Heart right ventricle (tissue), 16 donors: ENCODE measurements at regions of chr16 and their contacts with region 1.

Region 1: DNA sequence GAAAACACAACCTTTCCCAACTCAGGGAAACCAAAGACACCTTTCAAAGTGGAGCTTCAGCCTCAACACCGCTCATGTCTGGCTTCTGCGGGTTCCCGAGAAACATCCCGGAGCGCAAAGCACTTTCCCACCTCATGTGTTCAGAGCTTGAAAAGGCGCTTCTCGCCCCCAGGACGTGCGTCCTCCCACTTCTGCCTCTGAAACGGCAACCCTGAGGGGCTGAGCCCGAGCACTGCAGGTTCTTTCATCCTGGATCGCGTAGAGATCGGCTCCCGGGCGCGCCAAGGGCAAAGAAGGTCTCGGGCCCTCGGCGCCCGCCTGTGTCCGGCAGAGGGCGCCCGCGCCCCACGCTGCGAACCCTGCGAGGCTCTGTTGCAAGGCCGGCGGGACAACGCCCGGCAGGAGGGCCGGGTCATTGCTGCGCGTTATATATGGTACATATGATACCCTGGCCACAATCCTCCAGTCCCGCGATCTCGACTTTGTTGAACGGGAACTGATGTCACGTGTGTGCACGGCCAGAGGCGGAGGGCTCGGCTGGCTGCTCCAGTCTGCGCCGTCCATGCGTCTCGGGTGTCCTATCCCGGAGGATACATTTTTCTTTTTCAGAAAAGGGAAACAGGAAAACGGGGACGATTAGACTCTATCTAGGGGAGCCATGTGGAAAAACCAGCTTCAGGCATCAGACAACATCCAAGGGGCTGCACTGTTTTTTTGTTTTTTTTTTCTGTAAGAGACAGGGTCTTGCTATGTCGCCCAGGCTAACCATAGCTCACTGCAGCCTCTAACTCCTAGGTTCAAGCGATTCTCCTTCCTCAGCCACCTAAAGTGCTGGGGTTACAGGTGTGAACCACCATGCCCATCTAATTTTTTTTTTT is 19.1 kb downstream of the COQ7 start:
- DNase-seq: peak; percentile 79 to 88
- ATAC-seq: peak; percentile 93 to 98 (median 97)
- H3K4me3 ChIP-seq: peak overlapping the region in 9 of 10 donors; percentile 29 to 62 (median 54)
- H3K27ac ChIP-seq: peak overlapping the region in 5 of 10 donors; percentile 12 to 76 (median 28)
- H3K4me1 ChIP-seq: peaks cover 0 to 33% (median 11%) of the 10 kb centered on the region in 9 donors
- H3K27me3 ChIP-seq: peaks cover 0 to 13% (median 0%) of the 10 kb centered on the region in 7 donors
- CTCF ChIP-seq: peak; percentile 99 to 100 (median 100)

Region 2: DNA sequence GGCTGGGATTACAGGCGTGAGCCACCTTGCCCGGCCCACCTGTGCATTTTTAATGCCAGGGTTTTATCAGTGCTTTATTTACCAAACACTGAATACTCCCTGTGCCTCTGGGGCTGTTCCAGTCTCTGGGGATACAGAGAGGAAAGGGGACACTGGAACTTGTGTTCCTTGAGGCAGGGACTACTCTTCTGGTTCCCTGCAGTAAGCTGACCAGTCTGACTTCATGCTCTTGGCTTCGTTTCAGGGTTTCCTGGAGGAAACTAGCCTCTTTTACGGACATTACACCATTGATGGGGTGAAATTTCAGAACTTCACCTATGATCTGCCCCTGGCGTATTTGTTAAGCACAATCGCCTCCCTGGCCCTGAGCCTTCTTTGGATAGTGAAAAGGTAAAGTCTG is 56.6 kb before region 1 on chr16:
- intact Hi-C with region 1: no loop called
- DNase-seq: peak in 1 of 2 donors; percentile 33
- ATAC-seq: peak; percentile 50 to 86 (median 80)
- H3K4me3 ChIP-seq: no peak overlapping the region
- H3K27ac ChIP-seq: peak overlapping the region in 6 of 10 donors; percentile 14 to 64 (median 28)
- H3K4me1 ChIP-seq: peaks cover 0 to 18% (median 0%) of the 10 kb centered on the region in 9 donors
- H3K27me3 ChIP-seq: no peaks in the 10 kb centered on the region
- CTCF ChIP-seq: no peak

Region 3: GRCh38 chr16:19167710-19168370 is 81.3 kb after region 1 on chr16 and contains the start of gene SYT17:
- intact Hi-C with region 1: loop called in 3 of 10 experiments (anchors 2 to 10 kb)
- DNase-seq: peak; percentile 50 to 77
- ATAC-seq: peak; percentile 88 to 93 (median 91)
- H3K4me3 ChIP-seq: peak within 1 kb of the TSS; percentile 45 to 64 (median 58)
- H3K27ac ChIP-seq: peak within 1 kb of the TSS in 5 of 10 donors; percentile 54 to 71 (median 66)
- H3K4me1 ChIP-seq: peaks cover 0 to 24% (median 15%) of the 10 kb centered on the region in 9 donors
- H3K27me3 ChIP-seq: peaks cover 0 to 61% (median 27%) of the 10 kb centered on the region in 7 donors
- CTCF ChIP-seq: peak; percentile 48 to 84 (median 68)
- total RNA-seq, gene SYT17: 0.20 to 1.3 (median 0.69) TPM

Region 4: DNA sequence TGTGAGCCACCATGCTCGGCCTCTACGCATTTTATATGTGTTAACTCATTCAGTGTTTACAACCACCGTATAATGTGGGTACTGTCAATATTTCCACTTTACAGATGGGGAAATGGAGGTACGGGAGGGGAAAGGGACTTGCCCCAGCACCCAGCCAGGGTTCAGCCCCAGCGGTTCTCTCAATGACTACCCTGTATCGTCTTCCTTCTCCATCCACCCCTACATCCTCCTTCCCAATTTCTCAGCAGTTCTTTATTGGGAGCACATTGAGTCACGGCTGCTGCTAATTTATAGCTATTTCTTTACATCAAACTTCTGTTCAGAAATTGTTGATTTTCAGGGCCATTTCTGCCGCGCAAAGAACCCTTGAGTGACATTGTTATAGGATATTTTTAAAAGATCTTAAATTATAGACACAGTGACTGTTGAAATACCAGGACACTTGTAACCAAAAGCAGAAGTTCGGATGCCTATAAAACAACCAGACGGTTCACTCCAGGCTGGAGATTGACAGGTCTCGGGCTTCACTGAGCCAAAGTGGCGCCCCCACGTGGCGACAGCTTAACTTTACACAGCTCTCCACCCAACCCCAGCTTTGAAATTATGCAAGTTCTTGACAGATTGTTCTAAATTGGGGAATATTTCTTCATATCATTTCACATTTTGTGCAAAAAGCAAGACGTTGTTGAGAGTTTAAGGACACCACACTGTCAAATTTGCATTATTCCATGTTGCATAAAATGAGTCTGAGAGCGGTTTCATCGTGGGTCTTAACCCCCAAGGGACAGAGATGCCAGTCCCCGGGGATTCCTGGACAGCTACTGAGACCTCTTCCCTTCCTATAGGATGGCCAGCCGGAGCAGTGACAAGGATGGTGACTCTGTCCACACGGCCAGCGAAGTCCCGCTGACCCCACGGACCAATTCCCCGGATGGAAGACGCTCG is 93.3 kb after region 1 on chr16:
- intact Hi-C with region 1: loop called in 7 of 10 experiments (anchors 1 to 5 kb)
- DNase-seq: peak; percentile 55 to 70
- ATAC-seq: peak in 7 of 8 donors; percentile 63 to 83 (median 74)
- H3K4me3 ChIP-seq: no peak overlapping the region
- H3K27ac ChIP-seq: no peak overlapping the region
- H3K4me1 ChIP-seq: peaks cover 0 to 20% (median 0%) of the 10 kb centered on the region in 9 donors
- H3K27me3 ChIP-seq: peaks cover 0 to 8% (median 0%) of the 10 kb centered on the region in 7 donors
- CTCF ChIP-seq: peak; percentile 32 to 79 (median 61)

Region 5: GRCh38 chr16:19245326-19245925 is 158.9 kb after region 1 on chr16:
- intact Hi-C with region 1: no loop called
- DNase-seq: no peak
- ATAC-seq: no peak
- H3K4me3 ChIP-seq: no peak overlapping the region
- H3K27ac ChIP-seq: no peak overlapping the region
- H3K4me1 ChIP-seq: no peaks in the 10 kb centered on the region
- H3K27me3 ChIP-seq: no peaks in the 10 kb centered on the region
- CTCF ChIP-seq: no peak

Region 6: DNA sequence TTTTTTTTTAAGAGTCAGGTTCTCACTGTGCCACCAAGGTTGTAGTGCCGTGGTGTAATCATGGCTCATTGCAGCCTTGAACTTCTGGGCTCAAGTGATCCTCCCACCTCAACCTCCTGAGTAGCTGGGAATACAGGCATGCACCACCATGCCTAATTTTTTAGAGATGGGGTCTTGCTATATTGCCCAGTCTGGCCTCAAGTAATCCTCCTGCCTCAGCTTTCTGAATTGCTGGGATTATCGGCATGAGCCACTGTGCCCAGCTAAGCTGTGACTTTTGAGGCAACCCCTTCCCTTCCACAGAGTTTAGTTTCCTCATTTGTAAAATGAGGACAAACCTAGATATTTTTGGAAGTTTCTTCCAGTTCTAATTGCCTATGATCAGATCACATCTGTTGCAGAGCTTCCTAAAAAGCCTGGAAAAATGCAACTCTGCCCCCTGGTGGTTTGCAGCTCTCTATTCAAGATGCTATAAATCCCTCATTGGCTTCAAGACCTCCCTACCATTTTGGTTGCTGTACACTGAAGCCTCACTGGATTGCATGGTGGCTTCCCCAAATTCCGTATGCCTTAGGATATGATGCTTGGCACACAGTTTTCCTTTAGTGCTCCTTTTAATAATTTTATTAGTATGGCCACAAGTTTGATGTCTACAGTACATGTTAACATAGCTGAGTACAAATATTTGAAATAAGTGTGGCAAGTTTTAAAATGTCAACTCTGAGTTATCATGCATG is 416.0 kb after region 1 on chr16:
- intact Hi-C with region 1: loop called (anchors 1 to 10 kb)
- DNase-seq: peak in 1 of 2 donors; percentile 73
- ATAC-seq: peak in 5 of 8 donors; percentile 52 to 79 (median 68)
- H3K4me3 ChIP-seq: no peak overlapping the region
- H3K27ac ChIP-seq: no peak overlapping the region
- H3K4me1 ChIP-seq: peaks cover 0 to 12% (median 0%) of the 10 kb centered on the region in 9 donors
- H3K27me3 ChIP-seq: no peaks in the 10 kb centered on the region
- CTCF ChIP-seq: peak; percentile 55 to 84 (median 74)